ENCODE measurements at regions of chr16 and their contacts with region 1.

Region 1: GRCh38 chr16:86664533-86665318 is 86.4 kb downstream of the FOXL1 start:
- DNase-seq: peak; percentile 85
- ATAC-seq: peak; percentile 95
- H3K4me3 Mint-ChIP-seq: peak overlapping the region; percentile 21
- H3K27ac Mint-ChIP-seq: peak overlapping the region; percentile 83
- H3K4me1 Mint-ChIP-seq: peaks cover 28% of the 10 kb centered on the region
- H3K27me3 Mint-ChIP-seq: peaks cover 31% of the 10 kb centered on the region

Region 2: GRCh38 chr16:85947230-85948137 is 717.2 kb before region 1 on chr16:
- CTCF ChIA-PET with region 1: no interaction called
- POLR2A ChIA-PET with region 1: no interaction called
- intact Hi-C with region 1: loop called in 1 of 2 experiments (anchors 5 kb)
- DNase-seq: peak; percentile 80
- ATAC-seq: peak; percentile 90
- H3K4me3 Mint-ChIP-seq: peak overlapping the region; percentile 29
- H3K27ac Mint-ChIP-seq: peak overlapping the region; percentile 58
- H3K4me1 Mint-ChIP-seq: peaks cover 72% of the 10 kb centered on the region
- H3K27me3 Mint-ChIP-seq: peaks cover 9% of the 10 kb centered on the region

Region 3: GRCh38 chr16:86692426-86692825 is 27.7 kb after region 1 on chr16:
- CTCF ChIA-PET with region 1: no interaction called
- POLR2A ChIA-PET with region 1: no interaction called
- intact Hi-C with region 1: no loop called
- DNase-seq: no peak
- ATAC-seq: no peak
- H3K4me3 Mint-ChIP-seq: no peak overlapping the region
- H3K27ac Mint-ChIP-seq: no peak overlapping the region
- H3K4me1 Mint-ChIP-seq: no peaks in the 10 kb centered on the region
- H3K27me3 Mint-ChIP-seq: peaks cover 9% of the 10 kb centered on the region

Region 4: GRCh38 chr16:86714166-86714565 is 49.4 kb after region 1 on chr16:
- CTCF ChIA-PET with region 1: no interaction called
- POLR2A ChIA-PET with region 1: no interaction called
- intact Hi-C with region 1: no loop called
- DNase-seq: no peak
- ATAC-seq: no peak
- H3K4me3 Mint-ChIP-seq: no peak overlapping the region
- H3K27ac Mint-ChIP-seq: no peak overlapping the region
- H3K4me1 Mint-ChIP-seq: peaks cover 2% of the 10 kb centered on the region
- H3K27me3 Mint-ChIP-seq: peaks cover 13% of the 10 kb centered on the region